Heart left ventricle (tissue), 16 donors: ENCODE measurements at regions of chr15 and their contacts with region 1.

Region 1: DNA sequence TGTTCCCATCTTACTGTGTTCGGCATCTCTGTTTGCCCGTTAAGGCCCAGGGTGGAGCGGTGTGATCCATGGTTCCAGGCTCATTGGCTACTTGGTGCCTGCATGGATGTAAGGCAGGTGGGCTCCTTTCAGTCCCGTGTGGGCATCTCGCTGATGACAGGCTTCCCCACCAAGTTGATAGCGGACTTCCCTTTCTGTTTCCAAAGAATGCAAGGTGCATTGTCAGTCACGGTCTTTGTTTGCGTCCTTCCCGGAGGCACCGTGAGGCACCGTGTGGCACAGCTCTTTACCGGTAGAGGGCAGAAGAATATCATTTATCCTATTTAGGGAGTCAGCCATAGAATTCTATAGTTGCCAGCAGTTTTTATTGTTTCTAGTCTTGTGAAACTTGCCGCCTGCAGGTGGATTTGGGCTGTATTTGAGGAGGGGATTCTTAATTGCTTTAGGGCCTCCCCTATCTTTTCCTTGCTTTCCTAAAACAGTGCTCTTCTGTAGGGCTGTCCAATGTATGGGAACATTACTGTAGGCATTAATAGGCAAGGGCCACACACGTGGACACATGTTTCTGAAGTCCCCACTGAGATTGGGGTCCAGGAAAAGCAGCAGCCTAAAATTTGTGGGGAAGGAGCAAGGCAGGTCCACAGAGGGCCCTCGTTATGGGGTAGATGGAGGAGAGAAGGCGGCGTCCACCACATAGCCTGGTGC is 244.1 kb downstream of the SLCO3A1 start:
- DNase-seq: no peak
- ATAC-seq: peak; percentile 45 to 87 (median 76)
- H3K4me3 ChIP-seq: no peak overlapping the region
- H3K27ac ChIP-seq: peak overlapping the region in 1 of 12 donors; percentile 8
- H3K4me1 ChIP-seq: peaks cover 0 to 51% (median 12%) of the 10 kb centered on the region in 12 donors
- H3K27me3 ChIP-seq: no peaks in the 10 kb centered on the region
- CTCF ChIP-seq: peak; percentile 48 to 83 (median 66)
- POLR2A ChIP-seq: no peak

Region 2: DNA sequence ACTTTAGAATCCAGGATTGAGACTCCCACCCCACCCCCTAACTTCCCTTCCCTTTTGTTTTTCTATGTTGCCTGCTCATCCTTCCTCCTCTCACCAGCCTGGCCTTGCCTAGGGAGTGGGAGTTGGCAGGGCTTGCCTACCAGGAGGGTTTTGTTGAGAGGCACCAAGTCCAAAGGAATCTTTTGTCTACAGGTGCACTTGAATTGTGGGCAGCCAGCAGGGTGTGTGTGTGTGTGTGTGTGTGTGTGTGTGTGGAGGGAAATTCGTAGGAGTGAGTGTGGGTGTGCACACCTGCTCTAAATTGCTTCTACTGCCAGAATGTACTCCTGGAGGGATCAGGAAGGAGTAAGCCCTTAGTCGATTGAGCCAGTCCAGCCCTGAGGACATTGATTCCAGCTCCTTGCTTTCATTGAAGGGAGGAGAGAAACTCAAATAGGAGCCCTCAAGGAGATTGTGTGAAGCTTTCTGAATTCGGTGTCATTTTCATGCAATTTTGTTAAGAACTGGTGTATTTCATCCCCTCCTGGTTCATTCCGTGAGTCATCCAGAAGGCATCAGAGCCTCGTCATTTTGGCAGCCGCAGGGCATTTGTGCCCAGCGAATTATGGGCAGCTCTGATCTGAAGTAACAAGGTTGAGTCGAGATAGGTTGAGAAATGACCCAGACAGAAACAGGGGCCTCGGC is 132.0 kb before region 1 on chr15:
- intact Hi-C with region 1: no loop called
- DNase-seq: no peak
- ATAC-seq: peak in 3 of 4 donors; percentile 16 to 46 (median 42)
- H3K4me3 ChIP-seq: no peak overlapping the region
- H3K27ac ChIP-seq: peak overlapping the region in 10 of 12 donors; percentile 29 to 70 (median 49)
- H3K4me1 ChIP-seq: peaks cover 0 to 88% (median 74%) of the 10 kb centered on the region in 12 donors
- H3K27me3 ChIP-seq: no peaks in the 10 kb centered on the region
- CTCF ChIP-seq: no peak
- POLR2A ChIP-seq: no peak

Region 3: DNA sequence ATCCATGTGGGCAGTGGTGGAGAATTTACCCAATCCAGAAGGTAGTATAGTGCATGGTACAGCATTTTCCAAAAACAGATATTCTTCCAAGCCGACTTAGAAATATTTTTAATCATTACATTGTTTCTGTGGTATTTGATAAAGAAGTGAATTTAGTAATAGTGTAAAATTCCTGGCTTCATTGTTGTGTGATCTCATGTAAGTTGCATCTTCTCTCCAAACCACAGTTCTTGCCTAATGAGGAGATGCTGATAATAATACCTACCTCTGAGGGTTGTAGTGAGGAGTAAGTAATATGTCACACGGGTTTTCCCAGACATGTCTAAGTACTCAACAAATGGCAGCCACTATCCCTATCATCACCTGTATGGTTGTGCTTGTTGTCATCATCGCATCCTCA is 76.9 kb before region 1 on chr15:
- intact Hi-C with region 1: no loop called
- DNase-seq: no peak
- ATAC-seq: no peak
- H3K4me3 ChIP-seq: no peak overlapping the region
- H3K27ac ChIP-seq: peak overlapping the region in 1 of 12 donors; percentile 1
- H3K4me1 ChIP-seq: peaks cover 0 to 78% (median 50%) of the 10 kb centered on the region in 12 donors
- H3K27me3 ChIP-seq: no peaks in the 10 kb centered on the region
- CTCF ChIP-seq: no peak
- POLR2A ChIP-seq: no peak

Region 4: GRCh38 chr15:92197746-92198145 is 100.1 kb after region 1 on chr15:
- intact Hi-C with region 1: loop called in 2 of 10 experiments (anchors 5 to 10 kb)
- DNase-seq: no peak
- ATAC-seq: no peak
- H3K4me3 ChIP-seq: no peak overlapping the region
- H3K27ac ChIP-seq: no peak overlapping the region
- H3K4me1 ChIP-seq: peaks cover 0 to 6% (median 0%) of the 10 kb centered on the region in 12 donors
- H3K27me3 ChIP-seq: no peaks in the 10 kb centered on the region
- CTCF ChIP-seq: no peak
- POLR2A ChIP-seq: no peak

Region 5: GRCh38 chr15:92226014-92226612 is 128.5 kb after region 1 on chr15:
- intact Hi-C with region 1: loop called in 9 of 10 experiments (anchors 1 to 10 kb)
- DNase-seq: no peak
- ATAC-seq: peak in 3 of 4 donors; percentile 75 to 84 (median 76)
- H3K4me3 ChIP-seq: no peak overlapping the region
- H3K27ac ChIP-seq: no peak overlapping the region
- H3K4me1 ChIP-seq: no peaks in the 10 kb centered on the region
- H3K27me3 ChIP-seq: no peaks in the 10 kb centered on the region
- CTCF ChIP-seq: peak; percentile 26 to 60 (median 47)
- POLR2A ChIP-seq: no peak

Region 6: DNA sequence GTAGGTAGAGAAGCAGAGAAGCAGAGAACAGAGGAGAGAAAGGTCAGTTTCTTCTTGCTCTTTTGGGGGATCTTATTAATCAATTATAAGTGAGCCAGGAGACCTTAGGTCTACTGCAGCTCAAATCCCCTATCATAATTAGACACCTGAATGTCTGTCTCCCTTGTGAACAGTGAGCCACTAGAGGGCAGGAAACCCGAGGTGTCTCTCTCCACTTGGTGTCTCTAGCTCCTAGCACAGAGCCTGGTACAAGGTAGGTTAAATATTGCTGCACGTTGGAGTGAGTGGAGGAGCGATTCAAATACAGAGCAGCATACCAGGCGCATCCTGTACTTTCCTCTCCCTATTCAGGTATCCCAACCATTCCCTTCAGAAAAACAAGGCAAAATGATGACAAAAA is 294.0 kb after region 1 on chr15:
- intact Hi-C with region 1: loop called in 7 of 10 experiments (anchors 5 to 10 kb)
- DNase-seq: no peak
- ATAC-seq: peak in 3 of 4 donors; percentile 47 to 64 (median 60)
- H3K4me3 ChIP-seq: no peak overlapping the region
- H3K27ac ChIP-seq: no peak overlapping the region
- H3K4me1 ChIP-seq: peaks cover 0 to 24% (median 0%) of the 10 kb centered on the region in 12 donors
- H3K27me3 ChIP-seq: peaks cover 9 to 76% (median 25%) of the 10 kb centered on the region in 9 donors
- CTCF ChIP-seq: peak; percentile 8 to 54 (median 34)
- POLR2A ChIP-seq: no peak

Region 7: DNA sequence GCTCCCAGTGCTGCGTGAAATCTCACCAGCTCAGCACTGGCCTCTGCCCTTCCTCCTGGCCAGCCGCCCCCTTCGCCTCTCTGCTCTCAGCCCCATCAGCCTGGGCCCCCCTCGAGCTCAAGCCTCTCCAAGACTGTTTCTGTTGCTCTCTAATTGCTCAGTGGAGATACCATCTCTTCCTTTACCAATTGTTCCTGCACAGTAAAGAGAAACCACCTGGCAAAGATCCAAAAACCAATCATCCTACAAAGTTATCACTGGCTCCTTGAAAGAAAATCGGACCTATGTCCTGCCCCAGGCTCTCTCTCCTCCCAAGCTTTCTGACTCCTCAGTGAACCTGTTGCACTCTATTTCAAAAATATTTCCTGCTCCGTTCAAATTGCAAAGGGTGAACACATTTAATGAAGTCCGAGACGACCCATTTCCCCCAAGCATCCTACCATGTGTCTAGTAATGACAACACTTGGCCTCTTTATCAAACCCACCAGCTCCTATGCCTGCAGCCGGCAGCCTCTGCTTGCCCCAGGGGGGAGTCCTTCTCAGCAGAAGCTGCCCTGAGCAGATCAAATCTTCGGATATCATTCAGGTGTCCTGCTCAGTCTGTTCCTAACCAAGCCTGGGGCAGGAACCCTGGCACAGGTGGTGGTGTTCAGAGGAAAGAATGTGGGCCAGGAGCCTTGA is 611.6 kb after region 1 on chr15:
- intact Hi-C with region 1: loop called in 6 of 10 experiments (anchors 10 kb)
- DNase-seq: no peak
- ATAC-seq: no peak
- H3K4me3 ChIP-seq: no peak overlapping the region
- H3K27ac ChIP-seq: no peak overlapping the region
- H3K4me1 ChIP-seq: peaks cover 0 to 5% (median 0%) of the 10 kb centered on the region in 12 donors
- H3K27me3 ChIP-seq: peaks cover 0 to 3% (median 0%) of the 10 kb centered on the region in 9 donors
- CTCF ChIP-seq: no peak
- POLR2A ChIP-seq: no peak